CD4-positive, alpha-beta T cell (primary cell): ENCODE measurements at regions of chr5 and their contacts with region 1.

Region 1: GRCh38 chr5:157142317-157143126 is at the start of gene MED7:
- DNase-seq: peak; percentile 77 to 99 (median 88)
- ATAC-seq: peak; percentile 95
- H3K4me3 ChIP-seq: peak within 1 kb of the TSS; percentile 98
- H3K4me3 Mint-ChIP-seq: peak within 1 kb of the TSS; percentile 95
- H3K27ac ChIP-seq: peak within 1 kb of the TSS; percentile 88 to 94
- H3K27ac Mint-ChIP-seq: peak within 1 kb of the TSS; percentile 98
- H3K4me1 ChIP-seq: peaks cover 35% of the 10 kb centered on the region
- H3K4me1 Mint-ChIP-seq: peaks cover 57% of the 10 kb centered on the region
- H3K27me3 ChIP-seq: no peaks in the 10 kb centered on the region
- H3K27me3 Mint-ChIP-seq: no peaks in the 10 kb centered on the region
- CTCF ChIP-seq: no peak
- total RNA-seq, gene MED7: 7.0 to 8.7 TPM

Region 2: GRCh38 chr5:156718985-156719384 is 423.5 kb before region 1 on chr5:
- CTCF ChIA-PET with region 1: no interaction called
- POLR2A ChIA-PET with region 1: no interaction called
- intact Hi-C with region 1: no loop called
- DNase-seq: no peak
- ATAC-seq: no peak
- H3K4me3 ChIP-seq: no peak overlapping the region
- H3K4me3 Mint-ChIP-seq: no peak overlapping the region
- H3K27ac ChIP-seq: no peak overlapping the region
- H3K27ac Mint-ChIP-seq: no peak overlapping the region
- H3K4me1 ChIP-seq: no peaks in the 10 kb centered on the region
- H3K4me1 Mint-ChIP-seq: no peaks in the 10 kb centered on the region
- H3K27me3 ChIP-seq: no peaks in the 10 kb centered on the region
- H3K27me3 Mint-ChIP-seq: peaks cover 10% of the 10 kb centered on the region
- CTCF ChIP-seq: no peak

Region 3: DNA sequence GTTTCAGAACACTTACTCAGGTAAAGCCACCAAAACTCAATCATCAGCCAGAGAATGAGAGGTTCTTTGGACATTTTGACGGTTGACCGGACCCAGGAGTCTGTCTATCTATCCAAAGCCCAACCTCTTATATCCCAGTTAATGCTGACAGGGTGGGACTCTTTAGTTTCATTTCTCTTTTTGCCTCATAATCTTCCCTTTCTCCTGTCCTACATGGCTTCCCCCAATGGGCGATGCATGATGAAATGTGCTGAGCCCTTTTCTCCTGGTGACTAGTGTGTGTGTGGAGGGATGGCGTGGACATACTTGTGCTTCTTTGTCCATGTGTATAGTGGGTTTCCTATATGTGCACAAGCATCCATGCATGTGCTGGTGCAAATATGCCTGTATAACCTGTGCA is 179.4 kb before region 1 on chr5 and contains the start of gene TIMD4:
- CTCF ChIA-PET with region 1: no interaction called
- POLR2A ChIA-PET with region 1: no interaction called
- intact Hi-C with region 1: no loop called
- DNase-seq: no peak
- ATAC-seq: no peak
- H3K4me3 ChIP-seq: no peak within 1 kb of the TSS
- H3K4me3 Mint-ChIP-seq: no peak within 1 kb of the TSS
- H3K27ac ChIP-seq: no peak within 1 kb of the TSS
- H3K27ac Mint-ChIP-seq: no peak within 1 kb of the TSS
- H3K4me1 ChIP-seq: no peaks in the 10 kb centered on the region
- H3K4me1 Mint-ChIP-seq: no peaks in the 10 kb centered on the region
- H3K27me3 ChIP-seq: no peaks in the 10 kb centered on the region
- H3K27me3 Mint-ChIP-seq: no peaks in the 10 kb centered on the region
- CTCF ChIP-seq: no peak
- total RNA-seq, gene TIMD4: 1.6 to 2.0 TPM

Region 4: DNA sequence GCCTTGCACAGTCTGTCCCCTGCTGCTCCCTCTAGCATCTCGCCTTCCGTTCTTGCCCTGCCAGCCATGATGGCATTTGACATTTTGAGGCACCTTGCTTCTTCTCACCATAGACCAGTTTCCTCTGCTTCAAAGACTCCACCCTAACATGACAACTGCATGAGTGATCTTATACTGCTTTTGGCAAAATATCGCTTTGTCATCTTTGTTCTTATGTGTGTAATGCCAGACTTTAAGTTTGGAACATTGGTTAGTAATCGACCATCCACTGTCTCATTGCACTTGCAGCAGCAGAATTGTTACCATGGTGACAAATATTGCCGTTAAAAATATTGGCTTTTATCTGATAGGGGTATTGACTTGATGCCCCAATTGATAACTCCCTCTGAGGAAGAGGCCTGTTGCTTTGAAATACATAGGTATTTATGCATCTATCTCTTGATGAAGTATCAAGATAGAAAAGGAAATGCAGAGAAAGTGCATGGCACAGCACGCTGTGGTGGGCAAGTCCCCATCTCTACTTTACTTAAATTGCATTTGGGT is 16.8 kb after region 1 on chr5:
- CTCF ChIA-PET with region 1: no interaction called
- POLR2A ChIA-PET with region 1: interaction called, 16 read pairs
- intact Hi-C with region 1: no loop called
- DNase-seq: peak in 11 of 14 experiments; percentile 23 to 90 (median 44)
- ATAC-seq: peak; percentile 80
- H3K4me3 ChIP-seq: no peak overlapping the region
- H3K4me3 Mint-ChIP-seq: peak overlapping the region; percentile 54
- H3K27ac ChIP-seq: peak overlapping the region; percentile 79 to 93
- H3K27ac Mint-ChIP-seq: peak overlapping the region; percentile 65
- H3K4me1 ChIP-seq: peaks cover 39% of the 10 kb centered on the region
- H3K4me1 Mint-ChIP-seq: peaks cover 69% of the 10 kb centered on the region
- H3K27me3 ChIP-seq: no peaks in the 10 kb centered on the region
- H3K27me3 Mint-ChIP-seq: no peaks in the 10 kb centered on the region
- CTCF ChIP-seq: no peak

Region 5: DNA sequence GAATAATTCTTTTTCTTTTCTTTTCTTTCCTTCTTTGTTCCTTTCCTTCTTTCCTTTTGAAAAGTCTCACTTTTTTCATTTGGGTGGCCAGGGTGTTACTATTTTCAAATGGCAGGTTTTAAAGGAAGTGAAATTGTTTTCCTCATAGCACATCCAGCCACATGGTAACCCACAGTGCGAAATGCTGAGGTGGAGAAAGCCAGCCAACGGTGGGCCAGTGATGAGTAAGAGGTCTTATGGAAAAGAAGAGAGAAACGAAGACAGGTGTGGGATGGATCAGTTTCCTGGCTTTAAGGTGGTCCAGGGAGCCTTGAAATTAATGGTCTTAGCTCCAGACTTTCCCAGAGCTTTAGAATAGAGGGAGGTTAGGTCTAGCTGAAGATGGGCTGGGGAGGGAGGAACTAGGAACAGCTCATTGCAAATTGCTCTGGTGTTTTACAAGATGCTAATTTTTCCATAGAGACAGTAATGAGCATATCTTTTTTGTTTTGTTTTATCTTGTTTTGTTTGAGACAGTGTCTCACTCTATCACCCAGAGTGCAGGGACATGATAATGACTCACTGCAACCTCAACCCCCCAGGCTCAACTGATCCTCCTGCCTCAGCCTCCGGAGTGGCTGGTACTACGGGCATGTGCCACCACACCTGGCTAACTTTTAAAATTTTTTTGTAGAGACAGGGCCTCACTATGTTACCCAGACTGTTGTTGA is 55.9 kb after region 1 on chr5:
- CTCF ChIA-PET with region 1: no interaction called
- POLR2A ChIA-PET with region 1: interaction called, 38 read pairs
- intact Hi-C with region 1: no loop called
- DNase-seq: peak in 13 of 14 experiments; percentile 31 to 80 (median 59)
- ATAC-seq: peak; percentile 39
- H3K4me3 ChIP-seq: no peak overlapping the region
- H3K4me3 Mint-ChIP-seq: peak overlapping the region; percentile 49
- H3K27ac ChIP-seq: peak overlapping the region; percentile 63 to 79
- H3K27ac Mint-ChIP-seq: peak overlapping the region; percentile 96
- H3K4me1 ChIP-seq: peaks cover 80% of the 10 kb centered on the region
- H3K4me1 Mint-ChIP-seq: peaks cover 99% of the 10 kb centered on the region
- H3K27me3 ChIP-seq: no peaks in the 10 kb centered on the region
- H3K27me3 Mint-ChIP-seq: no peaks in the 10 kb centered on the region
- CTCF ChIP-seq: no peak

Region 6: DNA sequence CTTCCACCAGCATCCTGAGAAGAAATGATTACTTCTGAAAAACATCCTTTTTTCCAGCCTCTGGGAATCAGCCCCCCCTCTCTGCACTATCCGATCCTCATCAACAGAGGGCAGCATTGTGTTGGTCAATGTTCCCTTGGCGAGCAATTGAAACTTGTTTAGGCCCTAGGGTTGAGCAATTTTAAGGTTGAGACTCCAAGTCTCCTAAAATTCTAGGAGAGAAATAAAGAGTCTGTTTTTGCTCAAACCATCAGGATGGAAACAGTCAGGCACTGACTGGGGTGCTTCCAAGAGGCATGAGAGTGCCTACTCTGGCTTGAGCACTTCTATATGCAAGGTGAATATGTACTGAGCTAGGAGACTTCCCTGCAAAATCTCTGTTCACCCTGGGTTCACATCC is 111.0 kb after region 1 on chr5:
- CTCF ChIA-PET with region 1: no interaction called
- POLR2A ChIA-PET with region 1: interaction called, 26 read pairs
- intact Hi-C with region 1: loop called (anchors 5 kb)
- DNase-seq: peak in 2 of 14 experiments; percentile 30 to 66
- ATAC-seq: no peak
- H3K4me3 ChIP-seq: no peak overlapping the region
- H3K4me3 Mint-ChIP-seq: peak overlapping the region; percentile 74
- H3K27ac ChIP-seq: peak overlapping the region; percentile 46 to 73
- H3K27ac Mint-ChIP-seq: peak overlapping the region; percentile 91
- H3K4me1 ChIP-seq: peaks cover 76% of the 10 kb centered on the region
- H3K4me1 Mint-ChIP-seq: peaks cover 97% of the 10 kb centered on the region
- H3K27me3 ChIP-seq: no peaks in the 10 kb centered on the region
- H3K27me3 Mint-ChIP-seq: no peaks in the 10 kb centered on the region
- CTCF ChIP-seq: peak; percentile 73

Region 7: GRCh38 chr5:157303667-157304327 is 161.3 kb after region 1 on chr5:
- CTCF ChIA-PET with region 1: interaction called, 7 read pairs
- POLR2A ChIA-PET with region 1: interaction called, 20 read pairs
- intact Hi-C with region 1: no loop called
- DNase-seq: peak; percentile 45 to 86 (median 56)
- ATAC-seq: peak; percentile 72
- H3K4me3 ChIP-seq: peak overlapping the region; percentile 42
- H3K4me3 Mint-ChIP-seq: peak overlapping the region; percentile 87
- H3K27ac ChIP-seq: peak overlapping the region; percentile 54 to 65
- H3K27ac Mint-ChIP-seq: peak overlapping the region; percentile 80
- H3K4me1 ChIP-seq: peaks cover 57% of the 10 kb centered on the region
- H3K4me1 Mint-ChIP-seq: peaks cover 70% of the 10 kb centered on the region
- H3K27me3 ChIP-seq: no peaks in the 10 kb centered on the region
- H3K27me3 Mint-ChIP-seq: no peaks in the 10 kb centered on the region
- CTCF ChIP-seq: peak; percentile 26

Region 8: DNA sequence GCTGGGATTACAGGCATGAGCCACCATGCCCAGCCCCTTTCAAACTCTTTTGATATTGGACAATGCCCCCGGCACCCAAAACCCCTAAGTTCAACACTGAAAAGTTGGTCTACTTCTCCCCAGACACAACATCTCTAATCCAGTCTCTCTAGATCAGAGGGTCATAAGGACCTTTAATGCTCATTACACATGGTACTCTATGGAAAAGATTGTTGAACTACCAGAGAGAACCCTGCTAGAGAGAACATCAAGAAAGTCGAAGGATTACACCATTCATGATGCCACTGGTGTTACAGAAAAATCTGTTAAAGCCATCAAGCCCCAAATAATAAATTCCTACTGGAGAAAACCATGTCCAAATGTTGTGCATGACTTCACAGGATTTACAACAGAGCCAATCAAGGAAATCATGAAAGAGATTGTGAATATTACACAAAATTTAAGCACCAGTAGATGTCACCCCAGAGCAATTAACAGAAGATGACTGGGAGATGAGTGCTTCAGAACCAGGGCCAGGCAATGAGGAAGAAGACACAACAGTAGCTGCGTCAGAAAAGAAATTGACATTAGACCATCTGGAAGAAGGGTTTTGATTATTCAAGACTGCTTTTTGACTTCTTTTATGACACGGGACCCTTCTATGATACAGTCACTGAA is 289.1 kb after region 1 on chr5:
- CTCF ChIA-PET with region 1: no interaction called
- POLR2A ChIA-PET with region 1: no interaction called
- intact Hi-C with region 1: no loop called
- DNase-seq: peak in 6 of 14 experiments; percentile 2 to 77 (median 54)
- ATAC-seq: peak; percentile 82
- H3K4me3 ChIP-seq: no peak overlapping the region
- H3K4me3 Mint-ChIP-seq: no peak overlapping the region
- H3K27ac ChIP-seq: no peak overlapping the region
- H3K27ac Mint-ChIP-seq: no peak overlapping the region
- H3K4me1 ChIP-seq: no peaks in the 10 kb centered on the region
- H3K4me1 Mint-ChIP-seq: peaks cover 5% of the 10 kb centered on the region
- H3K27me3 ChIP-seq: no peaks in the 10 kb centered on the region
- H3K27me3 Mint-ChIP-seq: no peaks in the 10 kb centered on the region
- CTCF ChIP-seq: peak; percentile 56

Region 9: GRCh38 chr5:157858527-157859226 is 716.2 kb after region 1 on chr5 and contains the start of gene CLINT1:
- CTCF ChIA-PET with region 1: no interaction called
- POLR2A ChIA-PET with region 1: no interaction called
- intact Hi-C with region 1: loop called in 1 of 2 experiments (anchors 10 kb)
- DNase-seq: peak; percentile 78 to 94 (median 86)
- ATAC-seq: peak; percentile 95
- H3K4me3 ChIP-seq: peak within 1 kb of the TSS; percentile 84
- H3K4me3 Mint-ChIP-seq: peak within 1 kb of the TSS; percentile 99
- H3K27ac ChIP-seq: peak within 1 kb of the TSS; percentile 81 to 89
- H3K27ac Mint-ChIP-seq: peak within 1 kb of the TSS; percentile 94
- H3K4me1 ChIP-seq: peaks cover 40% of the 10 kb centered on the region
- H3K4me1 Mint-ChIP-seq: peaks cover 83% of the 10 kb centered on the region
- H3K27me3 ChIP-seq: no peaks in the 10 kb centered on the region
- H3K27me3 Mint-ChIP-seq: no peaks in the 10 kb centered on the region
- CTCF ChIP-seq: no peak
- total RNA-seq, gene CLINT1: 89.9 to 91.3 TPM

Region 10: GRCh38 chr5:158100373-158100888 is 957.9 kb after region 1 on chr5:
- CTCF ChIA-PET with region 1: no interaction called
- POLR2A ChIA-PET with region 1: no interaction called
- intact Hi-C with region 1: no loop called
- DNase-seq: no peak
- ATAC-seq: no peak
- H3K4me3 ChIP-seq: no peak overlapping the region
- H3K4me3 Mint-ChIP-seq: no peak overlapping the region
- H3K27ac ChIP-seq: no peak overlapping the region
- H3K27ac Mint-ChIP-seq: no peak overlapping the region
- H3K4me1 ChIP-seq: no peaks in the 10 kb centered on the region
- H3K4me1 Mint-ChIP-seq: no peaks in the 10 kb centered on the region
- H3K27me3 ChIP-seq: no peaks in the 10 kb centered on the region
- H3K27me3 Mint-ChIP-seq: peaks cover under 1% of the 10 kb centered on the region
- CTCF ChIP-seq: no peak